Heart right ventricle (tissue), 16 donors: ENCODE measurements at regions of chr1 and their contacts with region 1.

Region 1: DNA sequence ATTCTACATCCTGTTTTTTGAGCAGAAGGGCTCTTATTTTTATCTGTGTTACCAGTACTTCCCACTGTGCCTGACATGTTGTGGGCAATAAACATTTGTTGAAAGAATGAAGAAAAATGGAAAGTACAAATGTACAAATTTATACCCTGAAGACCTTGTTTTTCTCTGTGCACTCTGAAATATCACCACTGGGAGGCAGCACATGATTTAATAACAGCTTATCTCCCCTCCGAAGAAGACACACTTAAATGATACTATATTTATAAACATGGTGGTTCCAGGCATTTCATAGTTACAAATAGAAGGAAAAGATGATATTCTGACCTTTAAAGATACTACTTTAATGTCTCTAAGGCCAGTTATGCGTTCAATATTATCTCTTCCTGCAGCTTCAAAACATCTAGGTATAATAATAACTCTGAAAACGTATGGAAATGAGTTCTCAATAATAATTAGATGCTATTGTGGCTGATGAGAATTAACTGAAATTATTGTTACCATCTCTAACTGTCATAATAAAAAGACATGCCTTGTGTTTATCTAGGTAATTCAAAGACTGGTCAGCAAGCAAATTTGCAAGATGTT is 12.8 kb downstream of the DYNLT5 start:
- DNase-seq: peak in 1 of 2 donors; percentile 25
- ATAC-seq: peak in 1 of 8 donors; percentile 51
- H3K4me3 ChIP-seq: no peak overlapping the region
- H3K27ac ChIP-seq: no peak overlapping the region
- H3K4me1 ChIP-seq: peaks cover 0 to 12% (median 0%) of the 10 kb centered on the region in 9 donors
- H3K27me3 ChIP-seq: no peaks in the 10 kb centered on the region
- CTCF ChIP-seq: peak; percentile 50 to 84 (median 77)

Region 2: DNA sequence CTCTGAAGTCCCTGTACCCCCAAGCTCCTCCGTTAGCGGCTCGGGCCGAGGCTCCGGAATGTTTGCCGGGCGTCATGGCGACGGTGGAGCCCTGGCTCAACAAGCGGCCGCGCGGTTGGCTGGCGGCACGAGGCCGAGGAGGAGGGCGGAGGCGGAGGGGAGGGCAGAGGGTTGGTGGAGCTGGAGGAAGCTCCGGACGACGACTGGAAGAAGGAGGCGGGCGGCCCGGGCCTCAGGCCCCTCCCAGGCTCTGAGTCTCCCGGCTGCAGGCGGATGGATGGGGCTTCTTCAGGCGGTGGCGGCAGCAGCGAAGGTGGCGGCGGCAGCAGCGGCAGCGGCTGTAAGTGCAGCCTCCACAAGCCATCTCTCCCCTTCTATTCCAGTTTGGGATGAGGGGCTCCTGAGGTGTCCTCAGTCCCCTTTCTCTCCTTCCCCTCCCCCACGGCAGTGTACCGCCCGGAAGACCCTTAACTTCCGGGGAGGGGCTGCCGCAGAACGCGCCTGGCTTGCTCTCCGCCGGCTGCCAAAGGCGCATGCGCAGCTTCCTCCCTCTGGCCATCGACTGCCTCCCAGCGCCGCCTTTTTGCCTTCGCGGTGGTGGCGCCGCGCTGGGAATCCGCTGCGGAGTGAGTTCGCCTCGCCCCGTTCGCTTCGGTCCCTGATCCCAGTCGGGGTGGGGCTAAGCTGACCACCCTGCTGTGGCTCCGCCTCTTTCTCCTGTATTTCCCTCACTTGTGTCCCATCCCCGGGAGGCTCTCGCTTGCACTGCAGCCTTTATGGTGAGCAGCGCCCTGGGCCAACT is 159.9 kb after region 1 on chr1 and contains the starts of genes DNAI4 and MIER1:
- intact Hi-C with region 1: loop called in 4 of 10 experiments (anchors 5 to 10 kb)
- DNase-seq: peak; percentile 98
- ATAC-seq: peak; percentile 97 to 99 (median 98)
- H3K4me3 ChIP-seq: peak within 1 kb of the TSS; percentile 53 to 93 (median 77)
- H3K27ac ChIP-seq: peak within 1 kb of the TSS; percentile 85 to 96 (median 92)
- H3K4me1 ChIP-seq: peaks cover 0 to 51% (median 36%) of the 10 kb centered on the region in 9 donors
- H3K27me3 ChIP-seq: no peaks in the 10 kb centered on the region
- CTCF ChIP-seq: peak in 4 of 9 donors; percentile 17 to 51 (median 26)
- total RNA-seq, gene DNAI4: 8.0 to 24.5 (median 14.4) TPM
- total RNA-seq, gene MIER1: 16.9 to 22.4 (median 20.1) TPM

Region 3: DNA sequence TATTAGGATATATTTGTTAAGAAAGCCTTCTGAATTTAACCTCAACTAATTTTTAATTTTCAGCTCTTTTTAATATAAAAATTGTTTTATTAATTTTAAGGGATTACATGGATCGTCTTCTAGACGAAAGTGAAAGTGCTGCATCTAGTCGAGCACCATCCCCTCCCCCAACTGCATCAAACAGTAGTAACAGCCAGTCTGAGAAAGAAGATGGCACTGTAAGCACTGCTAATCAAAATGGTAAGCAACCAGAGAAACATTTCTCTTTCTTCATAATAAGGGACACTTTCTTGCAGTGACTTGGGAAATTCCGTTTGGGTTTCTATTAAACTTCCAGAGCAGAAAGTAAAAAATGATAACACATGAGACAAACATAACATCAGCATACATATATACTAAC is 216.6 kb after region 1 on chr1:
- intact Hi-C with region 1: loop called in 1 of 10 experiments (anchors 10 kb)
- DNase-seq: peak in 1 of 2 donors; percentile 48
- ATAC-seq: peak in 5 of 8 donors; percentile 70 to 85 (median 77)
- H3K4me3 ChIP-seq: peak overlapping the region in 6 of 10 donors; percentile 38 to 48 (median 46)
- H3K27ac ChIP-seq: peak overlapping the region in 5 of 10 donors; percentile 40 to 80 (median 49)
- H3K4me1 ChIP-seq: peaks cover 0 to 24% (median 11%) of the 10 kb centered on the region in 9 donors
- H3K27me3 ChIP-seq: no peaks in the 10 kb centered on the region
- CTCF ChIP-seq: peak in 2 of 9 donors; percentile 5 to 14

Region 4: GRCh38 chr1:67214420-67215174 is 449.5 kb after region 1 on chr1:
- intact Hi-C with region 1: loop called in 7 of 10 experiments (anchors 2 to 10 kb)
- DNase-seq: no peak
- ATAC-seq: no peak
- H3K4me3 ChIP-seq: no peak overlapping the region
- H3K27ac ChIP-seq: no peak overlapping the region
- H3K4me1 ChIP-seq: peaks cover 0 to 7% (median 0%) of the 10 kb centered on the region in 9 donors
- H3K27me3 ChIP-seq: no peaks in the 10 kb centered on the region
- CTCF ChIP-seq: peak in 8 of 9 donors; percentile 6 to 56 (median 48)

Region 5: DNA sequence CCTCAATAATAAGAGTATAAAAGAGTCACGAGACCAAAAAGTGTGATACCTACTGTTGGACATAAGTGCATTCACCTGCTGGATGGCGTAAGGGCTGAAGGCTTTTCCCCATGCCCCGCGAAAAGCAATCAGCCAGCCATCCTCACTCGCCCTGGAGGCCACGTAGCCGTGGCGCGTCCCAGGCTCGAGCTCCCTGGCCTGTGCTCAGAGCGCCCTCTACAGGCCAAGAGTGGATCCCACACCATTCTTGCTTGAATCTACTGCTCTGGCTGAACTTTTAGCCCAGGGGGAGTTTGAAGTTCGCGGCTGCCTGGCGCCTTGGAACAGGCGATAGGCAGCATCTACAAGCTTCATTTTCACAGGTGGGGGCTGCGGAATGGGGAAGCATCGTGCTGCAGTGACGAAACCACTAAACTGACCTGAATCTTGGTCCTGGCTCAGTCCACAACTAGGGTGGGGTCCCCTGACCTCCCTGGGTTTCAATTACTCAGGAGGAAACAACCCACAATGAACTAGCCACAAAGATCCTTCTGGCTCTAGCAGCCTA is 735.4 kb after region 1 on chr1:
- intact Hi-C with region 1: loop called in 3 of 10 experiments (anchors 10 kb)
- DNase-seq: peak; percentile 78 to 80
- ATAC-seq: peak; percentile 93 to 98 (median 95)
- H3K4me3 ChIP-seq: no peak overlapping the region
- H3K27ac ChIP-seq: no peak overlapping the region
- H3K4me1 ChIP-seq: peaks cover 0 to 7% (median 0%) of the 10 kb centered on the region in 9 donors
- H3K27me3 ChIP-seq: peaks cover 0 to 16% (median 0%) of the 10 kb centered on the region in 7 donors
- CTCF ChIP-seq: peak; percentile 97 to 100 (median 98)

Region 6: DNA sequence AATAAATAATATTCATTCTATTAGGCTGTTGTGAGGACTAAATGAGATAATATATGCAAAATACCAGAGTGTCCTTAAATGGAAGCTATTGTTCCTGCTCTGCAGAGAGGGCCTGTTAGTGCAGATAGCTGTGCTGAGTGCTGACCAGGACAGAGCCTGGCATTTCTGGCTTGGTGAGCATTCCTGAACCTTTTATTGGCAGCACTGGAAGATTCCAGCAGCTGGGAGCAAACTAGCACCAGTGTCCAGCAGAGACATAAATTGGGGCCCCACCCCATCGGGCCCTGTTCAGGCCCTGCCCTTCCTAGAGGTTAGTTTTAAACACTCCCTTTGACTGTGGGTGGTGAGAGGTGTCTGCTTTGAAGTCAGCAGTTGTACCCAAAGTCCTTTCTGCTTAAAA is 834.0 kb after region 1 on chr1:
- intact Hi-C with region 1: no loop called
- DNase-seq: no peak
- ATAC-seq: peak; percentile 73 to 96 (median 82)
- H3K4me3 ChIP-seq: no peak overlapping the region
- H3K27ac ChIP-seq: peak overlapping the region in 6 of 10 donors; percentile 5 to 75 (median 30)
- H3K4me1 ChIP-seq: peaks cover 0 to 6% (median 0%) of the 10 kb centered on the region in 9 donors
- H3K27me3 ChIP-seq: no peaks in the 10 kb centered on the region
- CTCF ChIP-seq: no peak